IMR-90 (cell line): ENCODE measurements at regions of chr19 and their contacts with region 1.

Region 1: GRCh38 chr19:5674714-5675113 is 5.6 kb downstream of the MICOS13 start:
- DNase-seq: no peak
- ATAC-seq: no peak
- H3K4me3 ChIP-seq: no peak overlapping the region
- H3K27ac ChIP-seq: no peak overlapping the region
- H3K4me1 ChIP-seq: peaks cover 5% of the 10 kb centered on the region
- H3K27me3 ChIP-seq: no peaks in the 10 kb centered on the region
- CTCF ChIP-seq: no peak
- POLR2A ChIP-seq: no peak
- RAD21 ChIP-seq: no peak

Region 2: GRCh38 chr19:5503598-5503997 is 171.1 kb before region 1 on chr19:
- CTCF ChIA-PET with region 1: no interaction called
- POLR2A ChIA-PET with region 1: no interaction called
- dilution Hi-C with region 1: no loop called
- in situ Hi-C with region 1: no loop called
- intact Hi-C with region 1: no loop called
- DNase-seq: no peak
- ATAC-seq: no peak
- H3K4me3 ChIP-seq: no peak overlapping the region
- H3K27ac ChIP-seq: no peak overlapping the region
- H3K4me1 ChIP-seq: no peaks in the 10 kb centered on the region
- H3K27me3 ChIP-seq: peaks cover 8% of the 10 kb centered on the region
- CTCF ChIP-seq: no peak
- POLR2A ChIP-seq: no peak
- RAD21 ChIP-seq: no peak

Region 3: DNA sequence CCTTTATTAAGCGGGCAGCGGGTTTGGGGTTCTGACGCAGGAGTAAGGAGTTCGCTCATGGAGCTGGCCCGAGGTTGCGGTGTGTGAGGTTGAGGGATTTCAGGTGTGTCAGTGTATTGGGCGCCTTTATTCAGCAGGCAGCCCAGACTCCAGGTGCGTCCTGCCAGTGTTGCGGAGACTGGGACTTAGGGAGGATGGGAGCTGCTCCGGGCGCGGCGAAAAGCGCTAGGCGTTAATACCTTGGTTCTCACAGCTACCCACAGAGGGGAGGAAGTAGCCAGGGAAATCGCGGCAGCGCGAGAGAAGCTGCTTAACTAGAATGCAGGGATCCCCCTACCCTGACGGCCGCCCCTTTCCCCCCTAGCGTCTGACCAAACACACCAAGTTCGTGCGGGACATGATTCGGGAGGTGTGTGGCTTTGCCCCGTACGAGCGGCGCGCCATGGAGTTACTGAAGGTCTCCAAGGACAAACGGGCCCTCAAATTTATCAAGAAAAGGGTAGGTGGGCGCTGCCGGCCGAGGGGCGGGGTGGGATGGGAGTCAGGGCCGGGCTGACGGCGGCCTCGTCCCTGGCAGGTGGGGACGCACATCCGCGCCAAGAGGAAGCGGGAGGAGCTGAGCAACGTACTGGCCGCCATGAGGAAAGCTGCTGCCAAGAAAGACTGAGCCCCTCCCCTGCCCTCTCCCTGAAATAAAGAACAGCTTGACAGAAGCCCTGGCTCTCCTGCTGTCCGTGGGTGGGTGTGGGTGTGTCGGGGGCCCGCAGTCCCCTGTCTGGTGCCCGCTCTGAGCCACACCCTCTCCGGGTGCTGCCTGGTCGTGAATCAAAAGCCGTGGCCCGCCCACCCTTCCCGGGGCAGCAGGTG is 16.5 kb after region 1 on chr19:
- CTCF ChIA-PET with region 1: no interaction called
- POLR2A ChIA-PET with region 1: interaction called, 19 read pairs
- dilution Hi-C with region 1: no loop called
- in situ Hi-C with region 1: no loop called
- intact Hi-C with region 1: no loop called
- DNase-seq: peak; percentile 31
- ATAC-seq: no peak
- H3K4me3 ChIP-seq: peak overlapping the region; percentile 74
- H3K27ac ChIP-seq: peak overlapping the region; percentile 78
- H3K4me1 ChIP-seq: peaks cover 2% of the 10 kb centered on the region; the same call in 1 of the 2 replicates
- H3K27me3 ChIP-seq: no peaks in the 10 kb centered on the region
- CTCF ChIP-seq: no peak
- POLR2A ChIP-seq: no peak
- RAD21 ChIP-seq: no peak

Region 4: DNA sequence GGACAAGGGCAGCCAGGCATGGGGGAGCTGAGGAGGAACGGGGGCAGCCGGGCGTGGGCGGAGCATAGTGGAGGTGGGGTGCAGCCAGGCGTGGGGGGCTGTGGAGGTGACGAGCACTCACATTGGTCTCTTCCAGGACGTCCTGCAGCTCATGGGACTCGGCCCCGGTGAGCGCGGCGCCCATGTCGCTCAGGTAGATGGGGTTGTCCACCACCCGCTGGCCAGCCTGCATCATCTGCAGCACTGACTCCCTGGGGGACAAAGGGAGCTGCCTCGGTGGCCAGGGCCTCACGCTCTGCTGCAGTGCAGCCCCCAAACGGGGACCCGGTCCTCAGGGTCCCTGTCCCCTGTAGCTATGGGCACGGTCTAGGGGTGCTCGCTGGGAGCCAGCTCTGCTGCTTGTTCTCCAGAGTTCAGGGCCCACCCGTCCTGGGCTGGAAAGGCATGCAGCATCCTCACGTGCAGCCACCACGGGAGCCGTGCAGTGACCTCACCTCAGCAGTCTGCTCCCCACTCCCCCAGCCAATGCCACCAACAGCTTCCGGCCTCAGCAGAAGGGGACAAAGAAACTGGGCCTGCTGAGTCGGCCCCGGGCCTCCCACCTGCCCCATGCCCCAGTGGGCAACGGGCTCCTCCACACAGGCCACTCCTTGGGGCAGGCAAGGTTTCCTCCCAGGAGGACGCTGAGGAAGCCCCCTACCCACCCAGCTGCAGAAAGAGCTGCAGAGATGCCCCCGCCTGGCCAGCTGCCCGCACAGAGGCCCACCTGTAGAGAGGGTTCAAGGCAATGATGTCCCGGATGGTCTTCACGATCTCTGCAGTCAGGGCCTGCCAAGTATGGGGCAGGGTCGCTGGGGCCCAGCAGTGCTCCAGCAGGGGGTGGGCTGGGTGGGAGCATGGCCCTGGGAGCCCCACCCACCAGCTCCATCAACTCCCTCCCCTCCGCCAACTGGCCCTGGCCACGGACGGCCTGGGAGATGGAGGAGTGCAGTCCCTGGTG is 33.2 kb after region 1 on chr19:
- CTCF ChIA-PET with region 1: no interaction called
- POLR2A ChIA-PET with region 1: no interaction called
- dilution Hi-C with region 1: no loop called
- in situ Hi-C with region 1: no loop called
- intact Hi-C with region 1: no loop called
- DNase-seq: no peak
- ATAC-seq: no peak
- H3K4me3 ChIP-seq: no peak overlapping the region
- H3K27ac ChIP-seq: no peak overlapping the region
- H3K4me1 ChIP-seq: 0 out of 2 replicates have a peak, but pooled peaks cover 2% of the 10 kb centered on the region
- H3K27me3 ChIP-seq: no peaks in the 10 kb centered on the region
- CTCF ChIP-seq: no peak
- POLR2A ChIP-seq: no peak
- RAD21 ChIP-seq: no peak

Region 5: GRCh38 chr19:5727453-5728050 is 52.8 kb after region 1 on chr19:
- CTCF ChIA-PET with region 1: no interaction called
- POLR2A ChIA-PET with region 1: no interaction called
- dilution Hi-C with region 1: no loop called
- in situ Hi-C with region 1: no loop called
- intact Hi-C with region 1: no loop called
- DNase-seq: no peak
- ATAC-seq: no peak
- H3K4me3 ChIP-seq: no peak overlapping the region
- H3K27ac ChIP-seq: no peak overlapping the region
- H3K4me1 ChIP-seq: no peaks in the 10 kb centered on the region
- H3K27me3 ChIP-seq: no peaks in the 10 kb centered on the region
- CTCF ChIP-seq: no peak
- POLR2A ChIP-seq: no peak
- RAD21 ChIP-seq: no peak